ENCODE measurements at regions of chr10 and their contacts with region 1.

Region 1: GRCh38 chr10:73529089-73529832 is 33.4 kb upstream of the PPP3CB start:
- DNase-seq: peak; percentile 37 to 42
- ATAC-seq: peak; percentile 82

Region 2: GRCh38 chr10:73647191-73647874 is 118.1 kb after region 1 on chr10:
- intact Hi-C with region 1: loop called in 1 of 2 experiments (anchors 5 kb)
- DNase-seq: peak; percentile 61 to 68
- ATAC-seq: peak; percentile 69